ENCODE measurements at regions of chr15 and their contacts with region 1.

Region 1: GRCh38 chr15:90362936-90363212 is 10.8 kb downstream of the ZNF774 start:
- DNase-seq: peak; percentile 66
- H3K4me3 ChIP-seq: no peak overlapping the region
- H3K27ac ChIP-seq: peak overlapping the region; percentile 90
- H3K4me1 ChIP-seq: peaks cover 44% of the 10 kb centered on the region
- H3K27me3 ChIP-seq: no peaks in the 10 kb centered on the region
- CTCF ChIP-seq: no peak

Region 2: GRCh38 chr15:90336705-90337141 is 26.2 kb before region 1 on chr15:
- CTCF ChIA-PET with region 1: no interaction called
- dilution Hi-C with region 1: no loop called
- in situ Hi-C with region 1: no loop called
- intact Hi-C with region 1: loop called (anchors 2 kb)
- DNase-seq: peak; percentile 90
- H3K4me3 ChIP-seq: no peak overlapping the region
- H3K27ac ChIP-seq: peak overlapping the region; percentile 70
- H3K4me1 ChIP-seq: peaks cover 28% of the 10 kb centered on the region
- H3K27me3 ChIP-seq: no peaks in the 10 kb centered on the region
- CTCF ChIP-seq: no peak

Region 3: DNA sequence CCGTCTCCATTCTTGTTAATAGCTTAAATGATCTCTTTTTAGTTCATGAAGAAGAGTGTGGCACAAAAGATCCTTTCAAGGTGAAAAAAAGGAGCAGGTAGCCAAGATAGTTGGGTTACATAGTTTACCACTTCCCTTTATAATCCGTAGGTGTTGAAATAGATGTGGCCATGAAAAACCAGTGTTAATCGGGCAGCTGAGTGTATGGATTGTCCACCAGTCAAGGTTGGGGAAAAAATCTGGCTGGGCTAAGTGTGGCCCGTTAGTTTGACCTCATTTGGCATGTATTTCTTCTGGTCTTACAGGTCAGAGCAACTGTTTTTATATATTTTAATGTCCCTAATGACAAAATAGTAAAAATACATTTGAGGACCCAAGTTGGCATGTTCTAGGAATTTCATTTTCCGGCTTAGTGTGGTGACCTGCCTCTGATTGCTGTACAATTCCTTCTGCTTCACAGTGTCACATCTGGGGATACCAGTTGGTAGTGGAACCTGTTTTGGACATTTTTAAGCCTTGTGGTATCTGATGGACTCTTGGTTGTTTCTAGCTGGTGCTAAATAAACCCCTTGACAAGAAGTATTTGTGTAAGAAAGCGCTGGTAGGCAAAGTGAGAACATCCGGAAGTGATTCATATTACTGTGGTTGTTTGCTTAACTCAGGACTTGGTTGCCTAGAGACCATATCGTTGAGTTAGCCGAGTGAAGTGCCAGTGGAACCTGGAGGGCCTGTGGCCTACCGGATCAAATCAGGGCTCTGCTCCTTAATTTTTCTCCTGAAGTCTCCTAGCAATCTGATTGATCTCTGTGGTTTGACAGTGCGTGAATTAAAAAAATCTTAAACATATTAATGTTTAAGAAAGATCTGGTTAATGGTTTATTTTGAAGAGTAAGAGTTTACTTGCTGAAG is 37.8 kb after region 1 on chr15:
- CTCF ChIA-PET with region 1: no interaction called
- dilution Hi-C with region 1: no loop called
- in situ Hi-C with region 1: no loop called
- intact Hi-C with region 1: loop called (anchors 1 kb)
- DNase-seq: peak; percentile 91
- H3K4me3 ChIP-seq: peak overlapping the region; percentile 8 to 31 (median 12)
- H3K27ac ChIP-seq: peak overlapping the region; percentile 95
- H3K4me1 ChIP-seq: peaks cover 44% of the 10 kb centered on the region
- H3K27me3 ChIP-seq: no peaks in the 10 kb centered on the region
- CTCF ChIP-seq: no peak

Region 4: GRCh38 chr15:90412356-90413194 is 49.7 kb after region 1 on chr15:
- CTCF ChIA-PET with region 1: no interaction called
- dilution Hi-C with region 1: no loop called
- in situ Hi-C with region 1: no loop called
- intact Hi-C with region 1: no loop called
- DNase-seq: peak; percentile 97
- H3K4me3 ChIP-seq: peak overlapping the region in 1 of 3 experiments; percentile 29
- H3K27ac ChIP-seq: peak overlapping the region; percentile 79
- H3K4me1 ChIP-seq: peaks cover 51% of the 10 kb centered on the region
- H3K27me3 ChIP-seq: no peaks in the 10 kb centered on the region
- CTCF ChIP-seq: no peak

Region 5: DNA sequence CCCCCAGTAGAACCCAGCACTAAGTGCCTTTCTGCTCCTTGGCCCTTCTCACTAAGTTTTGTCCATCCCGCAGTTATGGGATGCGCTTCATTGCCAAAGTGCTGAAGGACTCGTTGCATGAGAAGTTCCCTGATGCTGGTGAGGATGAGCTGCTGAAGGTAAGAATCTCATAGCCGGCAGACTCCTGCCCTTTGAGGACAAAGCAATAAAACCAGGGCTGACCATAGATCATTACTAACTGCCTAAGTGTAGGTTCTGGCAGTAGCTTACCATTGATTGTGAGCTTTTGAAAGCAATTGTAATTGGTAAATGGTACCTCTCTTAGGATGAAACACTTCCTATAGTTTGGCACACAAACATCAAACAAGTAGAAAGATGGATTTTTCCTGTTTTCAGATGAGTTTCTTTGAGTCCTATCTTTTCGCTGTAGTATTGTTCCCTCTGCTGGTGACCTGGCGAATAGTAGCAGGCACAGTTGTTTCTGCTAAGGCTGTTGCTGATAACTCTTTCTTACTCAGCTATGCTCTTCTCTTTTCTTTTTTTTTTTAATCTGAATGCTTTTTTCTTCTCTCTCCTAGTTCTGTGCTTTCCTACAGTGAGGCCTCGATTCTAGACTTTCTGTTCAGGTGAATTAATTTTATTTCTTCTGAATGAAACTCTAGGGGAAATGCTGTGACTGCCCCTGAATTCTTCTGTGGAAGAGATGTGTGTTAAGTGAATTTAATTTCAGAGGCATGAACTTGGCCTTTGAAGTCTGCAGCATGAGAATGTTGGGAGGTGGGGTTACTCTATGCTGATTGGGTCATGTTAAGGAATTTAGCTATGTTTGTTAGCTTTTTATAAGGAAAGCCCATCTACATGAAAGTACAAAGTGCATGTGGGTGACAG is 119.5 kb after region 1 on chr15:
- CTCF ChIA-PET with region 1: no interaction called
- dilution Hi-C with region 1: no loop called
- in situ Hi-C with region 1: no loop called
- intact Hi-C with region 1: loop called (anchors 1 kb)
- DNase-seq: no peak
- H3K4me3 ChIP-seq: no peak overlapping the region
- H3K27ac ChIP-seq: no peak overlapping the region
- H3K4me1 ChIP-seq: peaks cover 29% of the 10 kb centered on the region
- H3K27me3 ChIP-seq: no peaks in the 10 kb centered on the region
- CTCF ChIP-seq: peak; percentile 65 to 71

Measured in mammary epithelial cell (primary cell).